Activated CD8-positive, alpha-beta T cell treated with anti-CD3 and anti-CD28 coated beads, Interleukin-2, amount 10 ng/mL, durations not matched to agents 7 days and 5 days (primary cell): ENCODE measurements at regions of chr12 and their contacts with region 1.

Region 1: GRCh38 chr12:95003213-95003920 is at the start of gene NDUFA12:
- DNase-seq: peak; percentile 97
- ATAC-seq: peak; percentile 98
- H3K4me3 Mint-ChIP-seq: peak within 1 kb of the TSS; percentile 94
- H3K27ac Mint-ChIP-seq: peak within 1 kb of the TSS; percentile 94
- H3K4me1 Mint-ChIP-seq: peaks cover 54% of the 10 kb centered on the region
- H3K27me3 Mint-ChIP-seq: no peaks in the 10 kb centered on the region
- total RNA-seq, gene NDUFA12: 247 to 253 TPM

Region 2: GRCh38 chr12:94982456-94982855 is 20.9 kb before region 1 on chr12:
- CTCF ChIA-PET with region 1: no interaction called
- POLR2A ChIA-PET with region 1: interaction called, 14 read pairs
- DNase-seq: no peak
- ATAC-seq: no peak
- H3K4me3 Mint-ChIP-seq: no peak overlapping the region
- H3K27ac Mint-ChIP-seq: no peak overlapping the region
- H3K4me1 Mint-ChIP-seq: peaks cover 36% of the 10 kb centered on the region
- H3K27me3 Mint-ChIP-seq: no peaks in the 10 kb centered on the region

Region 3: GRCh38 chr12:94987801-94988200 is 15.6 kb before region 1 on chr12:
- CTCF ChIA-PET with region 1: interaction called, 4 read pairs
- POLR2A ChIA-PET with region 1: interaction called, 29 read pairs
- DNase-seq: no peak
- ATAC-seq: peak; percentile 54
- H3K4me3 Mint-ChIP-seq: peak overlapping the region; percentile 6
- H3K27ac Mint-ChIP-seq: peak overlapping the region; percentile 53
- H3K4me1 Mint-ChIP-seq: peaks cover 59% of the 10 kb centered on the region
- H3K27me3 Mint-ChIP-seq: no peaks in the 10 kb centered on the region

Region 4: DNA sequence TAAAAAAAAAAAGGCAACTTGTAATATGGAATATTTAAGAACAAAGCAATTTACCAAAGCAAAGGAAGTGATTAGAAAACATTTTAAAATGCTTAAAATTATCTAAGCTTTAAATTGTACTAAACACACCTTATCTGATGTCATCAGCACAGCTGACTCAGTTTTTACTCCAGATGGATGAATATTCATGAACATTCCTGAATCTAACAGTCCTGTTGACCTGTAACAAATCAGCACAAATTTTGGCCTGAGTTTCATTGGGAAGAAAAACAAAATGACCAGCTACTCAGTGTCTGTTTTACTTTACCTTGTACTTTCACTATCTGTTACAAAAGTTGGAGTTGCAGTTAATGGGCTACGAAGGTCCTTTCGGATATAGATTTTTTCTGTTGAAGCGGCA is 54.1 kb after region 1 on chr12:
- CTCF ChIA-PET with region 1: no interaction called
- POLR2A ChIA-PET with region 1: no interaction called
- DNase-seq: no peak
- ATAC-seq: no peak
- H3K4me3 Mint-ChIP-seq: no peak overlapping the region
- H3K27ac Mint-ChIP-seq: no peak overlapping the region
- H3K4me1 Mint-ChIP-seq: no peaks in the 10 kb centered on the region
- H3K27me3 Mint-ChIP-seq: no peaks in the 10 kb centered on the region

Region 5: GRCh38 chr12:95072900-95073697 is 69.7 kb after region 1 on chr12 and contains the start of gene NR2C1:
- CTCF ChIA-PET with region 1: interaction called, 7 read pairs
- POLR2A ChIA-PET with region 1: interaction called, 17 read pairs
- DNase-seq: peak; percentile 96
- ATAC-seq: peak; percentile 97
- H3K4me3 Mint-ChIP-seq: peak within 1 kb of the TSS; percentile 79
- H3K27ac Mint-ChIP-seq: peak within 1 kb of the TSS; percentile 93
- H3K4me1 Mint-ChIP-seq: peaks cover 16% of the 10 kb centered on the region
- H3K27me3 Mint-ChIP-seq: peaks cover 4% of the 10 kb centered on the region
- total RNA-seq, gene NR2C1: 30.5 to 32.8 TPM